ENCODE measurements at regions of chr12 and their contacts with region 1.

Region 1: GRCh38 chr12:105330283-105330930 is at the start of gene C12orf75:
- DNase-seq: peak; percentile 37 to 88
- H3K4me3 ChIP-seq: peak within 1 kb of the TSS; percentile 75 to 87
- H3K27ac ChIP-seq: peak within 1 kb of the TSS; percentile 62 to 83
- H3K4me1 ChIP-seq: peaks cover 0 to 19% of the 10 kb centered on the region in 2 donors
- H3K27me3 ChIP-seq: no peaks in the 10 kb centered on the region
- CTCF ChIP-seq: no peak
- total RNA-seq, gene C12orf75: 56.5 TPM

Region 2: GRCh38 chr12:105352052-105352451 is 21.6 kb after region 1 on chr12:
- intact Hi-C with region 1: loop called (anchors 2 kb)
- DNase-seq: no peak
- H3K4me3 ChIP-seq: no peak overlapping the region
- H3K27ac ChIP-seq: peak overlapping the region; percentile 33 to 59
- H3K4me1 ChIP-seq: peaks cover 8 to 47% of the 10 kb centered on the region in 2 donors
- H3K27me3 ChIP-seq: no peaks in the 10 kb centered on the region
- CTCF ChIP-seq: no peak